Psoas muscle (tissue), 8 donors: ENCODE measurements at regions of chr14 and their contacts with region 1.

Region 1: DNA sequence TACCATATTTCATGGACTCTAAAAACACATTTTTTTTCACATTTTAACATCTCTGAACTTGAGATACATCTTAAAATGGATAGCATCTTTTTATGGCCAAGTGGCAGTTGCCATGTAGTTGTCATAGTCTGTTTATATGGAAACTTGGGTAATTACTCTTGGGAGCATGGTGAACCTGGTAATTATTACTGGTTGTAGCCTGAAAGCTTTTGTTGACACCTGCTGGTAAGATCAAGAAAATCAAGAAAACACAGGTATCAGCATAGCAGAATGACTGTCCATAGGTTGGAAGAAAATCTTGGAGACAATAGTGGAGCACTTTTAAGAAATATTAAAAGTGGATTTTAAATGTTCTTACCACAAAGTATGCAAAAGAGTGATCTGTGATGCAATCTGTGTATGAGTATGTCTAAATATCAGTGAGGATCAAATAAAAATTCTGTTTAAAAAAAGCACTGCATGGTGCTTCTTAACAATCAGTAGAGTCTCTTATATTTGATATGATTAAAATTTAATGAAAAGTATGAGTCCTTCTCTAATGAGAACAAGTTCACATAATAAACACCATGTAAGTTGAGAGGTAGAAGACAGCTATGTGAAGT is 44.2 kb downstream of the TTC8 start:
- DNase-seq: no peak
- ATAC-seq: no peak
- H3K4me3 ChIP-seq: no peak overlapping the region
- H3K27ac ChIP-seq: no peak overlapping the region
- H3K4me1 ChIP-seq: no peaks in the 10 kb centered on the region
- H3K27me3 ChIP-seq: no peaks in the 10 kb centered on the region
- CTCF ChIP-seq: peak; percentile 26

Region 2: GRCh38 chr14:88667555-88668273 is 200.9 kb before region 1 on chr14:
- intact Hi-C with region 1: loop called (anchors 2 to 10 kb)
- DNase-seq: peak in 1 of 2 donors; percentile 26
- ATAC-seq: peak; percentile 57 to 84 (median 66)
- H3K4me3 ChIP-seq: no peak overlapping the region
- H3K27ac ChIP-seq: no peak overlapping the region
- H3K4me1 ChIP-seq: no peaks in the 10 kb centered on the region
- H3K27me3 ChIP-seq: no peaks in the 10 kb centered on the region
- CTCF ChIP-seq: peak; percentile 70